H1 (cell line): ENCODE measurements at regions of chr22 and their contacts with region 1.

Region 1: DNA sequence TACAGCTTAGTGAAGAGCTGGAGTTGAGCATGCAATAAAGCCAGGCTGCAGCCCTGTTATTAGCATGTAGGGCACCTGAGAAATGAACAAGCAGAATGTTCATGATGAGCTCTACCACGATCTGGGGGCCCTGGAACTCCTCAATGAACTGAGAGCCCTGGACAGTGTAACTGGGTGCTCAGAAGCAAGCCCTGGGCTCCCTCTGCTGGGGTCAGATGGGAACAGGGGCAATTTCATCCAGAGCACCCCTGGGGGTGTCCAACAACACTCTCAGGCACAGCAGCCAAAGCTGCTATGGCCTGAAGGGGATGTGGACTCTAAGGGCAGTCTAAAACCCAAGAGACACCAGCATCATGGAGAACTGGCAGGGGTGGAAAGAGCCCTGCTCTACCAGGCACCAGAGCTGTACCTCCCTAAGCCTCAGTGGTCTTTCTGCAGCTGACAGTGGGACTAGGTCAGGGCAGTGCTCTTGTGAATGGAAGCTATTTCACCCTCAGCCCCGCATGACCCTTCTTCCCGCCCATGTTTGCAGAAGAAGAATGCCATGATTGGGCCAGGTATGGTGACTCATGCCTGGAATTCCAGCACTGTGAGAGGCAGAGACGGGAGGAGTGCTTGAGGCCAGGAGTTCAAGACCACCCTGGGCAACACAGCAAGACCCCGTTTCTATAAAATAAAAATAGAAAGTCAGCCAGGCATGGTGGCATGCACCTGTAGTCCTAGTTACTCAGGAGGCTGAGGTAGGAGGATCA is 28.9 kb downstream of the THOC5 start:
- DNase-seq: peak; percentile 33 to 56
- H3K4me3 ChIP-seq: no peak overlapping the region
- H3K27ac ChIP-seq: no peak overlapping the region
- H3K4me1 ChIP-seq: no peaks in the 10 kb centered on the region
- H3K27me3 ChIP-seq: no peaks in the 10 kb centered on the region
- CTCF ChIP-seq: peak; percentile 52 to 71 (median 55)
- EP300 ChIP-seq: no peak
- POLR2A ChIP-seq: no peak
- RAD21 ChIP-seq: peak; percentile 71 to 80

Region 2: DNA sequence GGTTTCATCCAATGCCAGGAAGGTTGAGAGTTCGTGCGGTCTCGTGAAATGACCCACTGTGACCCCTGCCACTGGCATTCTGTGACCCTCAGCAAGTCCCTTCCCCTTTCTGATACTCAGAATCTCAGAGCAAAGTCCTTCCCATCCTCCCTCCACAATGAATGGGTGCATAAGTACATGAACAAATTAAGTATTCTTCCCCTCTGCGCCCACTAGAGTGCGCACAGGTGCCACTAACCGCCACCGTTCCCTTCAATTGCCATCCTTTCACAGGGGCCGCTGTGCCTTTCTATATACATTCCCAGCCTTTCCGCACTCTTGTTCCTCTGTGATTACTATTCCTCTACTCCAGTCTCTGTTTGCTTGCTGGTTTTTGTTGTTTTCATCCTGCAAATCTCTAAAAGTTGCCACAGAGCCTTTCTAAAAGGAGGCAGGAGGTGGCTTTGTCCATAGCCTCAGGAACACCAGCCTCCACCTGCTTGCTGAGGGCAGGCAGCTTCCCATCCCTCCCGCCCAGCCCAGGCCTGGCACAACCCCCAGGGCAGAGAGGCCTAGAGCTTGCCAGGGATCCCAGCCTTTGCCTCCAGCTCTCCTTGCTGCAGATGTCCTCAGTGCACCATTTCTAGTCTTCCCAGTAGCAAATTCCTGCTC is 129.6 kb before region 1 on chr22:
- CTCF ChIA-PET with region 1: interaction called, 47 read pairs
- POLR2A ChIA-PET with region 1: no interaction called
- DNase-seq: peak; percentile 36 to 75
- H3K4me3 ChIP-seq: no peak overlapping the region
- H3K27ac ChIP-seq: no peak overlapping the region
- H3K4me1 ChIP-seq: no peaks in the 10 kb centered on the region
- H3K27me3 ChIP-seq: no peaks in the 10 kb centered on the region
- CTCF ChIP-seq: peak; percentile 84 to 97 (median 93)
- EP300 ChIP-seq: no peak
- POLR2A ChIP-seq: no peak
- RAD21 ChIP-seq: peak; percentile 97

Region 3: GRCh38 chr22:29470159-29470855 is 54.3 kb before region 1 on chr22:
- CTCF ChIA-PET with region 1: interaction called, 21 read pairs
- POLR2A ChIA-PET with region 1: interaction called, 3 read pairs
- DNase-seq: peak; percentile 81 to 99
- H3K4me3 ChIP-seq: peak overlapping the region; percentile 38 to 69 (median 50)
- H3K27ac ChIP-seq: no peak overlapping the region
- H3K4me1 ChIP-seq: peaks cover 0 to 6% (median 3%) of the 10 kb centered on the region in 4 experiments; a peak in 3 of 7 replicates
- H3K27me3 ChIP-seq: peaks cover 0 to 4% (median 2%) of the 10 kb centered on the region in 4 experiments; a peak in 3 of 7 replicates
- CTCF ChIP-seq: peak; percentile 90 to 98 (median 97)
- EP300 ChIP-seq: peak in 1 of 2 experiments; percentile 85; a peak in 2 of 3 replicates
- POLR2A ChIP-seq: 0 out of 3 replicates have a peak, but pooled peaks of 1 of the 2 experiments have one; percentile 27
- RAD21 ChIP-seq: peak; percentile 57 to 72

Region 4: GRCh38 chr22:29503811-29504372 is 20.7 kb before region 1 on chr22:
- CTCF ChIA-PET with region 1: interaction called, 12 read pairs
- POLR2A ChIA-PET with region 1: no interaction called
- DNase-seq: no peak
- H3K4me3 ChIP-seq: no peak overlapping the region
- H3K27ac ChIP-seq: no peak overlapping the region
- H3K4me1 ChIP-seq: no peaks in the 10 kb centered on the region
- H3K27me3 ChIP-seq: no peaks in the 10 kb centered on the region
- CTCF ChIP-seq: no peak
- EP300 ChIP-seq: no peak
- POLR2A ChIP-seq: no peak
- RAD21 ChIP-seq: no peak

Region 5: GRCh38 chr22:29512031-29512430 is 12.6 kb before region 1 on chr22:
- CTCF ChIA-PET with region 1: interaction called, 33 read pairs
- POLR2A ChIA-PET with region 1: interaction called, 13 read pairs
- DNase-seq: no peak
- H3K4me3 ChIP-seq: no peak overlapping the region
- H3K27ac ChIP-seq: no peak overlapping the region
- H3K4me1 ChIP-seq: no peaks in the 10 kb centered on the region
- H3K27me3 ChIP-seq: no peaks in the 10 kb centered on the region
- CTCF ChIP-seq: no peak
- EP300 ChIP-seq: no peak
- POLR2A ChIP-seq: no peak
- RAD21 ChIP-seq: no peak

Region 6: GRCh38 chr22:29541845-29542244 is 17.2 kb after region 1 on chr22:
- CTCF ChIA-PET with region 1: interaction called, 14 read pairs
- POLR2A ChIA-PET with region 1: interaction called, 10 read pairs
- DNase-seq: no peak
- H3K4me3 ChIP-seq: no peak overlapping the region
- H3K27ac ChIP-seq: no peak overlapping the region
- H3K4me1 ChIP-seq: no peaks in the 10 kb centered on the region
- H3K27me3 ChIP-seq: no peaks in the 10 kb centered on the region
- CTCF ChIP-seq: no peak
- EP300 ChIP-seq: no peak
- POLR2A ChIP-seq: no peak
- RAD21 ChIP-seq: no peak

Region 7: DNA sequence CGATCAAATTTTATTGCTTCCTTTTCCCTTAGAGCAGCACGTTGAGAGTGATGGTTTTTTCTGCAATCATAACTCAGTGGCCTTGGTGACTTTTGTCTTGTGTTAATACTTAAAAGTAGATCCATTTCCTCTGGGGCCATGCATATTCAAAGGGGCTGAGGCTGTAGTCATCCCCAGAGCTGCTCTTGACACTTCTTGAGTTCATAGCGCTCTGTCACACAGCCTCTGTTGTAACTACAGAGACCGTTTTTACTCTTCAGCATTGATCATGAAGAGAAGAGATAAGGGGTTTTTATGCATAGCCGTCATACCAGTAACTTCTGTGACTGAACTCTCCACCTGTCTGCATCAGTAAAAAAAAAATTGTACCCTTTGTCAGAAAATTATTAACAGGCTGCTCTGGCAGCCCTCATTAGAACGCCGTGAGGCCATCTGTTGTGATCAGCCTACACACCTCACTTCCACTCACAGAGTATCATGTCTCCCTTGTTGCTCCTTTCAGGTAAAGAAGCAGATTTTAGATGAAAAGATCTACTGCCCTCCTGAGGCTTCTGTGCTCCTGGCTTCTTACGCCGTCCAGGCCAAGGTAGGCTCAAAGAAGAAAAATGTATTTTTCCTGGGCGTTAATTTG is 117.2 kb after region 1 on chr22:
- CTCF ChIA-PET with region 1: no interaction called
- POLR2A ChIA-PET with region 1: no interaction called
- DNase-seq: no peak
- H3K4me3 ChIP-seq: no peak overlapping the region
- H3K27ac ChIP-seq: no peak overlapping the region
- H3K4me1 ChIP-seq: no peaks in the 10 kb centered on the region
- H3K27me3 ChIP-seq: no peaks in the 10 kb centered on the region
- CTCF ChIP-seq: no peak
- EP300 ChIP-seq: no peak
- POLR2A ChIP-seq: no peak
- RAD21 ChIP-seq: no peak